A549 (cell line): ENCODE measurements at regions of chr20 and their contacts with region 1.

Region 1: DNA sequence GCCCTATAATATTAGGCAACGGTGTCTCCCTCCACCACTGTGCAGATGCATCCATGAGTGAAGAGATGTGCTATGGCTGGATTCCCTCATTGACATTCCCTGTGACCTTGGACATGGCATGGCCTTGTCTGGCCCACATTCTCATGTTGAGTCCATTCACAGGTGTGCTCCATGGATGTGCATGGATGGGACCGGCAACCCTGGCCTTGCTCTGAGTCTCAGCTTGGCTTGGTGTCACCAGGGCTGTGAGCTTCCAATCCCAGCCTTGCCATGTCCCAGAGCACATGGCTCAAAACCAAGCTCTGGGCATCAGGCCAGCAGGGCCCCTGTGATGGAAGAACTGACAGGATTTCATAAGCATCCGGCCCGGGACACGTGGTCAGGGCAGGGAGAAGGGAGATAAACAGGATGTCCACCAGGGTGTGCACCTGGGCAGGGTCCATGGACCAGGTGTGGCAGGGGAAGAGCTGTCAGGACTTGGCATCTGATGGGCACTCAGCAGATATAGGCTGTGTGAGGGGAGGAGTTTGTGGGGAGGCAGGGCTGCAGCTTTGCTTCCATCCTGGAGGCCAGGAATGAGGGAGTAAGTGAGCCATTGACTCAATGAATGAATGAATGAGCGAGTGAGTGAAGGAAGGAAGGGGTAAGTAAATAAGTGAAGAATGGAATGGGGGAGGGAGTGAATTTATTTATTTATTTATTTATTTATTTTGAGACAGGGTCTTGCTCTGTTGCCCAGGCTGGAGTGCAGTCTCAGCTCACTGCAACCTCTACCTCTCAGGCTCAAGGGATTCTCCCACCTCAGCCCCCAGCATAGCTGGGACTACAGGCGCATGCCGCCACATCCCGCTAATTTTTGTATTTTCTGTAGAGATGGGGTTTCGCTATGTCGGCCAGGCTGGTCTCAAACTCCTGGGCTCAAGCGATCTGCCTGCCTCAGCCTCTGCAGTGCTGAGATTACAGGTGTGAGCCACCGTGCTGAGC is 15.7 kb downstream of the NRSN2 start:
- DNase-seq: peak; percentile 94 to 98
- ATAC-seq: peak; percentile 84 to 85
- H3K4me3 ChIP-seq: peak overlapping the region; percentile 10; the same call in 1 of the 3 replicates
- H3K27ac ChIP-seq: peak overlapping the region; percentile 94 to 98
- H3K4me1 ChIP-seq: peaks cover 86% of the 10 kb centered on the region
- CTCF ChIP-seq: peak; percentile 66
- EP300 ChIP-seq: peak in 1 of 2 experiments; percentile 62; a peak in 1 of 5 replicates
- POLR2A ChIP-seq: no peak
- RAD21 ChIP-seq: peak; percentile 80 to 91

Region 2: GRCh38 chr20:347640-348484 is 14.7 kb before region 1 on chr20:
- CTCF ChIA-PET with region 1: interaction called, 66 read pairs
- POLR2A ChIA-PET with region 1: interaction called, 15 read pairs
- DNase-seq: peak; percentile 97 to 98
- ATAC-seq: peak; percentile 87 to 89
- H3K4me3 ChIP-seq: peak overlapping the region; percentile 66
- H3K27ac ChIP-seq: peak overlapping the region; percentile 82 to 93
- H3K4me1 ChIP-seq: peaks cover 15% of the 10 kb centered on the region
- CTCF ChIP-seq: no peak
- EP300 ChIP-seq: no peak
- POLR2A ChIP-seq: peak; percentile 64
- RAD21 ChIP-seq: no peak

Region 3: DNA sequence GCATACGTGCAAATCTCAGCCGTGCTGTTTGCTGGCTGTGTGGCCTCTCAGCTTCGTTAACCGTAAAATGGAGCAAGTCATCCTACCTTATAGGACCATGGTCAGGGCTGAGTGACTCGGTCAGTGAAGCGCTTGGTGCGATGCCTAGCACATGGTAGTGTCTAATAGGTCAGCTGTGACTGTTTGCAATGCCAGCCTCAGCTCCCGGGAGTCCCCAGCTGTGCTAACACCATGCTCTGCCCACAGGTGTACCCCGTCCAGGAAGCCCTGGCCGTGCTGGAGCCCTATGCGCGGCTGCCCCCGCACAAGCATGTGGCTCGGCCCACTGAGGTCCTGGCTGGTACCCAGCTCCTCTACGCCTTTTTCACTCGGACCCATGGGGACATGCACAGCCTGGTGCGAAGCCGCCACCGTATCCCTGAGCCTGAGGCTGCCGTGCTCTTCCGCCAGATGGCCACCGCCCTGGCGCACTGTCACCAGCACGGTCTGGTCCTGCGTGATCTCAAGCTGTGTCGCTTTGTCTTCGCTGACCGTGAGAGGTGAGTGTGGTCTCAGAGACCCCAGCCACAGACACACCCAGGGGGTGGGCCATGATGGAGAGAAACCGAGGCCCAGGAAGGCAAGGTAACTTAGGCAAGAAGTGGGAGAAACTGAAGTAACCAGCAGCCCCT is 28.6 kb after region 1 on chr20:
- CTCF ChIA-PET with region 1: interaction called, 85 read pairs
- POLR2A ChIA-PET with region 1: interaction called, 147 read pairs
- DNase-seq: no peak
- ATAC-seq: peak; percentile 44 to 49
- H3K4me3 ChIP-seq: no peak overlapping the region
- H3K27ac ChIP-seq: no peak overlapping the region
- H3K4me1 ChIP-seq: peaks cover 41% of the 10 kb centered on the region; the same call in 2 of the 3 replicates
- CTCF ChIP-seq: no peak
- EP300 ChIP-seq: no peak
- POLR2A ChIP-seq: no peak
- RAD21 ChIP-seq: no peak

Region 4: DNA sequence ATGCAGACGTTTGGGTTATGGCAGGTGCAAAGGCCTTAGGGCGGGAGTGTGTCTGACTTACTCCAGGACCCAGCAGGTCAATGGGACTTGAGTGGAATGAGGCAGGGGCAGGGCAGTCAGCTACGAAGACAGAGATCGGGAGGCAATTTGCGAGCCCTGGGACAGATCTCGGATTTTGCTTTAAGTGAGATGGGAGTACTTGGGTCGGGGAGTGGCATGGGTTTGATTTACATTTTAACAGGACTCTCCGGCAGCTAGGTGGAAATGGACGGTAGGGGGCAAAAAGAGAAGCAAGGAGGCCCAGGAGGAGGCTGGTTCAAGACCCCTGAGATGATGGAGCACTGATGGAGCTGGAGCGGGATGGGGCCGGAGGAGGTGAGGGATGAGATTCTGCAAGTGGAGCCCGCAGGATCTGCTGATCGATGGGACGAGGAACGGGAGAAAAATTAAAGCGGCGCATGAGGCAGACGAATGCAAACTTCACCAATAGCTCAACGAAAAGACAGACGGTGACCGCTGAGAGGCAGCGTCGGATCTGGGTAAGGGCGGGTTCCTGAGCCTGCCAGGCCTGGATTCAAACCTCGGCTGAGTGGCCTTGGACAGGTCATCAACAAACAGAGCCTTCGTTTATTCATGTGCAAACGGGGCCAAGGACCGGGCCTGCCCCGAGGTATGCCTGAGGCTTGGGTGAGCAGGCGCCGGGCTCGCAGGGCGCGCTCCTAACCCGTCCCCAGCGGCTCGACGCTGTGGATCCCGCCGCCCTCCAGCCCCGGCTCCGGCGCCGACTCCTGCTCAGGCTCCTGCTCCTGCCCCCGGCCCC is 44.8 kb after region 1 on chr20:
- CTCF ChIA-PET with region 1: interaction called, 46 read pairs
- POLR2A ChIA-PET with region 1: interaction called, 50 read pairs
- DNase-seq: peak; percentile 91
- ATAC-seq: peak; percentile 87
- H3K4me3 ChIP-seq: peak overlapping the region; percentile 48
- H3K27ac ChIP-seq: peak overlapping the region; percentile 93 to 99
- H3K4me1 ChIP-seq: peaks cover 31% of the 10 kb centered on the region
- CTCF ChIP-seq: peak; percentile 47
- EP300 ChIP-seq: no peak
- POLR2A ChIP-seq: peak; percentile 74
- RAD21 ChIP-seq: peak; percentile 26 to 54; a peak in 4 of 5 replicates

Region 5: GRCh38 chr20:431012-431904 is 68.7 kb after region 1 on chr20:
- CTCF ChIA-PET with region 1: interaction called, 1,229 read pairs
- POLR2A ChIA-PET with region 1: interaction called, 13 read pairs
- DNase-seq: peak; percentile 94 to 95
- ATAC-seq: peak; percentile 70 to 93
- H3K4me3 ChIP-seq: no peak overlapping the region
- H3K27ac ChIP-seq: peak overlapping the region; percentile 27 to 73; a peak in 5 of 6 replicates
- H3K4me1 ChIP-seq: peaks cover 16% of the 10 kb centered on the region
- CTCF ChIP-seq: peak; percentile 99
- EP300 ChIP-seq: no peak
- POLR2A ChIP-seq: no peak
- RAD21 ChIP-seq: peak; percentile 95 to 98

Region 6: GRCh38 chr20:472889-473292 is 110.3 kb after region 1 on chr20:
- CTCF ChIA-PET with region 1: interaction called, 18 read pairs
- POLR2A ChIA-PET with region 1: no interaction called
- DNase-seq: no peak
- ATAC-seq: peak; percentile 26 to 54; a peak in 3 of 6 replicates
- H3K4me3 ChIP-seq: no peak overlapping the region
- H3K27ac ChIP-seq: no peak overlapping the region
- H3K4me1 ChIP-seq: no peaks in the 10 kb centered on the region
- CTCF ChIP-seq: no peak
- EP300 ChIP-seq: no peak
- POLR2A ChIP-seq: no peak
- RAD21 ChIP-seq: no peak